PC-3 (cell line): ENCODE measurements at regions of chr7 and their contacts with region 1.

Region 1: GRCh38 chr7:94004024-94004951 is at the start of gene BET1:
- DNase-seq: peak; percentile 97
- ATAC-seq: peak; percentile 92
- H3K4me3 ChIP-seq: peak within 1 kb of the TSS; percentile 99
- H3K27ac ChIP-seq: peak within 1 kb of the TSS; percentile 64
- H3K4me1 ChIP-seq: peaks cover 19% of the 10 kb centered on the region
- H3K27me3 ChIP-seq: no peaks in the 10 kb centered on the region
- CTCF ChIP-seq: no peak
- total RNA-seq, gene BET1: 7.9 and 12.1 TPM in 2 replicates

Region 2: DNA sequence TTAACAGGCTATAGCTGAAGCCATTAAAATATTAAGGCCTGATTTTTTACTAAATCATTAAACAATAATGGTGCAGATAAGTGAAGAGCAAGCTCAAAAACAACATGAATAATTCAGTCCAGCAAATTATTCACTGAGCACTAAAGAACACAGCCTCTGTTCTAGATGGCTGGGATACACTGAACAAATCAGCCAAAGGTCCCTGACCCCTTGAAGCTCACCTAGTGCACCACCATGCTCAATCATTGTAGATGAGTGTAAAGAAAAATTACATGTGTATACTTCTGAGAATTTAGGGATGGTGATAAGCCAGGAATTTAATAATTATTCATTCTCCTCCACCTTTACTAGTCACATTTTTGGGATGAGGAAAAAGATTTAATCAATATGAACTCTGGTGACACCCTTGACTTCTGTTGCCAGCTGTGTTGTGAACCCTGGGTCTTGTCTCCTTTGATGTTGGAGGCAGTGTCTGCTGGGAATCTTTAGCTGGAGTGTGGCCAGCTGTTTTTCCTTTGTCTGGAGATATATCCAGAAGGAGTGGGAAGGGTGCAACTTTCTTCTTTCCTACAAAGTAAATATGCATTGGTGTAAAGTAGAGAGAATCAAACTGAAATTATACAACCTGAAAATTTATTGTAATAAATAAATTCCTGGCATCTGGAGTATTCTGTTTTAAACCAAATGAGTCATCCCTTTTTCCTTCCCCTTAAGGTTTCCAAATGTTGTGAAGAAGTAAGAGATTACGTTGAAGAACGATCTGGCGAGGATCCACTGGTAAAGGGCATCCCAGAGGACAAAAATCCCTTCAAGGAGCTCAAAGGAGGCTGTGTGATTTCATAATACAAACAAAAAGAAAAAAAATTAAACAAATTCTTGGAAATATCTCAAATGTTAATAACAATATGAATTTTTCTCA is 94.0 kb before region 1 on chr7:
- CTCF ChIA-PET with region 1: interaction called, 4 read pairs
- POLR2A ChIA-PET with region 1: no interaction called
- intact Hi-C with region 1: loop called (anchors 2 kb)
- DNase-seq: peak; percentile 31
- ATAC-seq: peak; percentile 53
- H3K4me3 ChIP-seq: no peak overlapping the region
- H3K27ac ChIP-seq: no peak overlapping the region
- H3K4me1 ChIP-seq: peaks cover 13% of the 10 kb centered on the region
- H3K27me3 ChIP-seq: peaks cover 4% of the 10 kb centered on the region; the same call in 1 of the 2 replicates
- CTCF ChIP-seq: no peak

Region 3: DNA sequence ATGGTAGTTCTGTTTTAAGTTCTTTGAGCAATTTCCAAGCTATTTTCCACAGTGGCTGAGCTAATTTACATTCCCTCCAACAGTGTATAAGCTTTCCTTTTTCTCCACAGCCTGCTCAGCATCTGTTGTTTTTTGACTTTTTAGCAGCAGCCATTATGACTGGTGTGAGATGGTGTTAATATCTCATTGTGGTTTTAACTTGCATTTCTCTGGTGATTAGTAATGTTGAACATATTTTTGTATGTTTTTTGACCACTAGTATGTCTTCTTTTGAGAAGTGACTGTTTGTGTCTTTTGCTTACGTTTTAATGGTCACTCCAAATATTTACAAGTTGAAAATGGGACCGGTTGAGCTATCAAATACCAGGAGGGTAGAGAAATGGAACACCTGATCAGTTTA is 62.3 kb before region 1 on chr7:
- CTCF ChIA-PET with region 1: no interaction called
- POLR2A ChIA-PET with region 1: no interaction called
- intact Hi-C with region 1: no loop called
- DNase-seq: no peak
- ATAC-seq: no peak
- H3K4me3 ChIP-seq: no peak overlapping the region
- H3K27ac ChIP-seq: no peak overlapping the region
- H3K4me1 ChIP-seq: no peaks in the 10 kb centered on the region
- H3K27me3 ChIP-seq: no peaks in the 10 kb centered on the region
- CTCF ChIP-seq: no peak